ENCODE measurements at regions of chr4 and their contacts with region 1.

Region 1: DNA sequence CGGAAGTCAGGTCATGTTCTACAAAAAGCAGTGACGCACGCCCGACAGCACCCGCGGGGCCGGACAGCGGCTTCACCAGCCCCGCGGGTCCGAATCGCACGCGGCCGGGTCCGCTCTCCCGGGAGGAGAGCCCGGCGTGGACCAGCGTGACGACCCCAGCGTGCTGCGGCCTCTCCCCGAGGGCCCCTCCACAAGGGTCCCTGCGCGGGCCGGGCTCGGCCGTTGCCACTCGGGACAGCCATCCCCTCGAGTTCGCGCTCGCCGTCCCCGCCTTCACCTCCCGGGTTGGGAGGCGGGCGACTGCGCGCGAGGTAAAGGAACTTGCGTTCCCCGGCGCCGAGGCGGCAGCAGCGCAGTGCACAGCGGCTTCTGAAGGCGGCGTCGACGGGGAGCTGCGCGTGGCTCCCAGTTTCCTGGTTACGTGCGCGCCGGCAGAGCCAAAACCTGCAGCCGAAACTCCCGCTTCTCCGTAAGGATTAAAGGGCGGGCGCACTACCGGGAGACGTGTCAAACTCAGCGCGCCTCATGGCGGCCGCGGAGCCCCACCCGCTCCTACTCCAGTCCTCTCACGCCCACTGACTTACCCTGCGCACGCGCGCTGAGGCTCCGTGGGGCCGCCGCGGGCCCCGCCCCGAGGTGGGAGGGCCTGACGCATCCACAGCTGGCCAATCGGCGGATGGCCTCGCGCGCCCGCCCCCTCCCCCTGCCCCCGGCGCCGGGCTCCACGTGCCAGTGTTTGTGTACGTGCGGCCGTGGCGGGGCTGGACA is 416 bp upstream of the LRP2BP start:
- DNase-seq: peak; percentile 96 to 98
- ATAC-seq: peak; percentile 96 to 99 (median 97)
- H3K4me3 ChIP-seq: peak overlapping the region; percentile 58 to 83 (median 73)
- H3K27ac ChIP-seq: peak overlapping the region; percentile 98 to 100 (median 99)
- H3K4me1 ChIP-seq: peaks cover 7 to 47% (median 43%) of the 10 kb centered on the region in 9 donors
- H3K27me3 ChIP-seq: no peaks in the 10 kb centered on the region
- CTCF ChIP-seq: no peak

Region 2: GRCh38 chr4:184544788-184545409 is 851.2 kb before region 1 on chr4:
- intact Hi-C with region 1: no loop called
- DNase-seq: no peak
- ATAC-seq: peak in 4 of 8 donors; percentile 21 to 39 (median 36)
- H3K4me3 ChIP-seq: no peak overlapping the region
- H3K27ac ChIP-seq: no peak overlapping the region
- H3K4me1 ChIP-seq: peaks cover 0 to 5% (median 0%) of the 10 kb centered on the region in 9 donors
- H3K27me3 ChIP-seq: no peaks in the 10 kb centered on the region
- CTCF ChIP-seq: no peak

Region 3: DNA sequence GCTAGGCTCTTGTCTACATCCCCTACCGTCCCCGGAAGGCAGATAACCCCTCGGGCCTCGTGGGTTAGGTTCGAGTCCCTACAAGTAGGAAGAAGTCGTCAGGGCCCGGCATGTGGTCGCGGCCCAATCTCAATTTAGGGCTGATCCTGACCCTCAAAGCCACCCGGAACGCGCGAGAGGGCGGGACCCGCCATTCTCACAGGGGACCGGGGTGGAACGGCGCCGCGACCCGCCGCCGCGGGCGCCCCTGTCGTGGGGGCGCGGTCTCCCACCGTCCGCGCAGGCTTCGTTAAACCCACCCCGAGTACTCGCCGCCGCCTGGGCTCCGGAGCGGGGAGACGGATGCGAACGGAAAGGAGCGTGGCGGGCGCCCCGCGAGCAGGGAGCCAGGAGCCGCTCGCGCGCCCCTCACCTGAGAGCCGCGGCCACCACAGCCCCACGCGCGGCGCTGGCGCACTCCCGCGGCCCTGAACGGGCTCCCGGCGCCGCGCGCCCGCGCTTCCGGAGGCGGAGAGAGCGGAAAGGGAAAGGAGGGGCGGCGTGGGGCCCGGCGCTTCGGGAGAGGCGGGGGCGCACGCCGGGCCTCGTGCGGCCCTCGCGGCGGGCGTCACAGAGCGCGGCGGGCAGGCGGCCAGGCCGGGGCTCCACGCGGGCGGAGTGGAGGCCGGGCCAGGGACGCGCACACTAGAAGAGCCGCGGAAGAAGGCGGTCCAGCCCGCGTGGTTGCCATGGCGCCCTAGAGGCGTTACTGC is 192.5 kb before region 1 on chr4 and contains the start of gene CFAP97:
- intact Hi-C with region 1: loop called in 3 of 10 experiments (anchors 5 to 10 kb)
- DNase-seq: peak; percentile 90 to 92
- ATAC-seq: peak; percentile 92 to 96 (median 94)
- H3K4me3 ChIP-seq: peak within 1 kb of the TSS; percentile 42 to 86 (median 79)
- H3K27ac ChIP-seq: peak within 1 kb of the TSS; percentile 93 to 99 (median 98)
- H3K4me1 ChIP-seq: peaks cover 6 to 39% (median 27%) of the 10 kb centered on the region in 9 donors
- H3K27me3 ChIP-seq: peaks cover 0 to 7% (median 0%) of the 10 kb centered on the region in 7 donors
- CTCF ChIP-seq: peak in 3 of 9 donors; percentile 9 to 24 (median 18)
- total RNA-seq, gene CFAP97: 10.6 to 20.9 (median 13.0) TPM

Region 4: DNA sequence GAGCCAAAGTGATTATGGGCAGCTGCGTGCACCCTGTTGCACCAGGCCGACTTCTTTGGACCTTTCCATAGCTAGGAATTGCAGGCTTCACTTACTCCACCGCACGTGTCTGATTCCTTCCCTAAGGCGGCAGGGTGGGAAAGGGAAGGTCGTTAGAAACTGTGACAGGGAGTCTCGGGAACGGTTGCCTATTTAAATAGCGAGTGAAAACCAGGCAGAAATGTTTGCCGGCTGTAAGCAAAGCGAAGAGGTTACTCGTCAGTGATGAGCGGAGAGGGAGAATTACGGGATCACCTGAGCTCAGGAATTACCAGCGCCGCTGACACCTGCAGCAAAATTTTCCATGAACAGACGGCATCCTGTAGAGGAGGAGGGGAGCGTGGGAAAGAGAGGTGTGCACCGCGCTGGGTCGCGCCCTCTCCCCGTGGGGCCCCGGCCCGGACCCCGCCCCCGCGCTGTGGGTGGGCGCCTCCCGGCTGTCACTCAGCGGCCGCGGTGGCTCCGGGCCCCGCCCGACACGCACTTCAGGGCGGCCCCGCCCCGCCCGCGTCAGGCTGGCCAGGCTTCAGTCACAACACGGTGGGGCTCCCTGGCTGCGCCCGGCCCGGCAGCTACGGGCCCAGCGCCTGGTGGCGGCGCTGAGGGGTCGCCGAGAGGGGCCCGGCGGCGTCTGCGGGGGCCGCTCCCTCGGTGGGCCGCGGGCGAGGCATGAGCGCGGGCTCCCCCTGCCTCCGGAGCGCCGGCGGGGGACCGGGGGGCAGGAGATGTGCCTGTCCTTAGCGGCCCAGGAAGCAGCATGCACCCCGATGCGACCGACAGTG is 186.9 kb before region 1 on chr4 and contains the start of gene SNX25:
- intact Hi-C with region 1: loop called in 7 of 10 experiments (anchors 5 to 10 kb)
- DNase-seq: peak; percentile 85 to 90
- ATAC-seq: peak; percentile 94 to 98 (median 96)
- H3K4me3 ChIP-seq: peak within 1 kb of the TSS; percentile 54 to 94 (median 70)
- H3K27ac ChIP-seq: peak within 1 kb of the TSS; percentile 65 to 91 (median 87)
- H3K4me1 ChIP-seq: peaks cover 6 to 35% (median 27%) of the 10 kb centered on the region in 9 donors
- H3K27me3 ChIP-seq: peaks cover 0 to 43% (median 0%) of the 10 kb centered on the region in 7 donors
- CTCF ChIP-seq: peak in 4 of 9 donors; percentile 32 to 57 (median 41)
- total RNA-seq, gene SNX25: 7.4 to 12.6 (median 9.8) TPM

Region 5: DNA sequence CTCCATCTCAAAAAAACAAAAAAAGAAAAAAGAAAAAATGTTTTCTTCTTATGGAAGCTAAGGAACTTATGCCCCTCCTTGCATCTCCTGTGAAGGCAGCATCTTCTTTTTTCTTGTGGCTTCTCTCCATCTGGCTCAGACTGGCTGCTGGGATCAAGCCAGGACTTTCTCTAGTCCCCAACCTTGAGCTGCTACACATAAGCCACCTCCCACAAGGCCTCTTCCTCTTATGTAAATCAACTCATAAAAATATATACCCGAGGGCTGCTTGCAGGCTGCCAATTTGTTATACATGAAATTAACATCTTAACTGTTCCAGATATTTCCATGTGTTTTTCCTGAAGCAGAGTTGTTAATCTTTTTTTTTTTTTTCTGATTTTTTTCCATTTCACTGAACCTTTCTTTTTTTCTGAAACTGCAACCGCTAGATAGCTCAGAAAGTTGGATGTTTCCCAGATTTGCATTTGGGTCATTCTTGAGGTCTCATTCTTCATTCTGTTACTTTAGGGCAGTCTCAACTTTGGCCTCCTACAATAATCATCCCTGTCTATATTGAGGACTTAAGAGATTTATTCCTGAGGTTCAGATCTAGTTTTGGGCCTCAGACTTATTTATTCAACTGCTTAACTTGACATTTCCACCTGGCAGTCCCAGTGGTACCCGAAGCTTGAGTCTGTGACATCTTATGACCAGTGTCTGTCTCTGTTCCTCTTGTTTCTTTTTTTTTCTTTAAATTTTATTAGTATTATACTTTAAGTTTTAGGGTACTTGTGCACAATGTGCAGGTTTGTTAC is 176.4 kb before region 1 on chr4:
- intact Hi-C with region 1: loop called in 5 of 10 experiments (anchors 5 to 10 kb)
- DNase-seq: peak; percentile 25 to 58
- ATAC-seq: peak in 6 of 8 donors; percentile 47 to 64 (median 54)
- H3K4me3 ChIP-seq: no peak overlapping the region
- H3K27ac ChIP-seq: peak overlapping the region in 2 of 10 donors; percentile 25 to 36
- H3K4me1 ChIP-seq: peaks cover 0 to 41% (median 22%) of the 10 kb centered on the region in 9 donors
- H3K27me3 ChIP-seq: no peaks in the 10 kb centered on the region
- CTCF ChIP-seq: no peak

Region 6: DNA sequence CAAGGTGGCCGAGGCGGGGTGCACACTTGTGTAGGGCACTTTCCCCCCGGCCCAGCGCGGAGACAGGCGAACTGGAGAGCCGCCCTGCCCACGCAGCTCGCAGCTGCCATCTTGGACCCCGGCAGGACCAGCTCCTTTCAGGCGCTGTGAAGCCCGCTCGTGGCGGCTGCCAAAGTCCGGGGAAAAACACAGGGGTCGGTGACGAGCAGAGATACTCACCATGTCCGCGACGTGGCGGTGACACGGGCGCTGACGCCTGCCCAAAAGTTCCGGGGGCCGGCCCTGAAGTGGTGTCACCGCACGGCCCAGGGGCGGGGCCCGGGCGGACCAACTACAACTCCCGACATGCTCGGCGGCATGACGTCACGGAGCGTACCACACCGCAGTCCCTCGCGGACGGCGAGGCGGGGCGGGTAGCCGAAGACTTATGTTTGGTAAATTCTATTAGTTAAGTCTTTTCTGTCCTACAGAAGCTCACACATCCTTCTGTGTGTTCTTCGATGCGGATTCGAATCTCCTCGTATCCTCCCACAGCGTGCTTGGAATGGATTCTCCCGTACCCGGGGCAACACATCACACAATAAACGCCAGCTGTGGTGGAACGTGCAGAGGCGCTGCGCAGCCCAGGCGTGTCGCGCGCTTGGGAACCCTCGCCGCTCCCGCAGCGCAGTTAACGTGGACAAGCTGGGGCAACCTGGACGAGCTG is 29.7 kb after region 1 on chr4 and contains the start of gene UFSP2:
- intact Hi-C with region 1: loop called in 2 of 10 experiments (anchors 2 kb)
- DNase-seq: peak; percentile 89 to 90
- ATAC-seq: peak; percentile 97 to 99 (median 98)
- H3K4me3 ChIP-seq: peak within 1 kb of the TSS; percentile 50 to 89 (median 75)
- H3K27ac ChIP-seq: peak within 1 kb of the TSS; percentile 89 to 97 (median 95)
- H3K4me1 ChIP-seq: peaks cover 0 to 48% (median 32%) of the 10 kb centered on the region in 9 donors
- H3K27me3 ChIP-seq: no peaks in the 10 kb centered on the region
- CTCF ChIP-seq: no peak
- total RNA-seq, gene UFSP2: 29.4 to 52.4 (median 43.7) TPM

Region 7: DNA sequence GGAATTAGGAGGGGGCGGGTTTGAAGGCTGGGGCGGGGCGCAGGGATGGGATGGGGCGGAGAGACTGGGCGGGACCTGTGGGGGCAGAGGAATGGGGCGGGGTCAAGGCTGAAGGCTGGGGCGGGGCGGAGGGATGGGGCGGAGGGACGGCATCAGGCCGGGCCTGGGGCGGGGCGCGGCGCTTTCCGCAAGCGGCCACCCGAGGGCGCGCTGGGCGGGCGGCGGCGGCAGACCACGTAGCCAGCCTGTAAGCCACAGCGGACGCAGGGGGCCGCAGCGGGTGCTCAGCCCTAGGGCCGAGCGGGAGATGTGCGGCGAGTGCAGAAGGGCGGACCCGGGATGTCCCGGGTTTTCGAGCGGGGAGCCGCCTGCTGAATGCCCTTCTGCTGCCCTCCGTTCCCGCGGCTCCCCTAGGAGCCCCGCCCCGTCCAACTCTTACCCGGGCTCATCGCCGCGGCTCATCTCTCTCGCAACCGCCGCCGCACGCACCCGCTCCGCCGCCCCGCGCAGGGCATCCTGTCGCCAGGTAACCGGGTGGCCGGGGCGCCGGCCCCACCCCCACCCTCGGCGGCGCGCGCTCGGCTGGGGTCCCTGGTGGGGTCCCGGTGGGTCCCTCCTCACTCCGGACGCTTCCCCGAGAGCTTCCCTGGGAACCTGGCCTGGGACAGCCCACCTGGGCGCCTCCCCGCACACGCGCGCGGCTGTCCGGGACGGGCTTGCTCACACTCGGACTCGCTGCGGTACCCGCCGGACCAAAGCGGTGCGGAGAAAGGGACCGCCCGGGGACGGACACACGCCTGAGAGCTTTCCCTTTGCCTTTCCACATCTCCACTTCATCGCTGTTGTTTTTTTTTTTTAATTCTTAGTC is 75.3 kb after region 1 on chr4 and contains the start of gene CCDC110:
- intact Hi-C with region 1: loop called in 1 of 10 experiments (anchors 5 kb)
- DNase-seq: peak; percentile 96 to 97
- ATAC-seq: peak; percentile 96 to 98 (median 98)
- H3K4me3 ChIP-seq: peak within 1 kb of the TSS; percentile 68 to 98 (median 86)
- H3K27ac ChIP-seq: peak within 1 kb of the TSS in 9 of 10 donors; percentile 40 to 81 (median 77)
- H3K4me1 ChIP-seq: peaks cover 0 to 22% (median 12%) of the 10 kb centered on the region in 9 donors
- H3K27me3 ChIP-seq: peaks cover 0 to 37% (median 0%) of the 10 kb centered on the region in 7 donors
- CTCF ChIP-seq: peak; percentile 61 to 91 (median 75)
- total RNA-seq, gene CCDC110: 0.54 to 2.5 (median 1.9) TPM

Region 8: GRCh38 chr4:185524888-185525863 is 129.0 kb after region 1 on chr4:
- intact Hi-C with region 1: no loop called
- DNase-seq: no peak
- ATAC-seq: peak in 4 of 8 donors; percentile 36 to 70 (median 54)
- H3K4me3 ChIP-seq: no peak overlapping the region
- H3K27ac ChIP-seq: peak overlapping the region in 4 of 10 donors; percentile 5 to 57 (median 28)
- H3K4me1 ChIP-seq: peaks cover 6 to 52% (median 18%) of the 10 kb centered on the region in 9 donors
- H3K27me3 ChIP-seq: peaks cover 0 to 28% (median 0%) of the 10 kb centered on the region in 7 donors
- CTCF ChIP-seq: no peak

Region 9: DNA sequence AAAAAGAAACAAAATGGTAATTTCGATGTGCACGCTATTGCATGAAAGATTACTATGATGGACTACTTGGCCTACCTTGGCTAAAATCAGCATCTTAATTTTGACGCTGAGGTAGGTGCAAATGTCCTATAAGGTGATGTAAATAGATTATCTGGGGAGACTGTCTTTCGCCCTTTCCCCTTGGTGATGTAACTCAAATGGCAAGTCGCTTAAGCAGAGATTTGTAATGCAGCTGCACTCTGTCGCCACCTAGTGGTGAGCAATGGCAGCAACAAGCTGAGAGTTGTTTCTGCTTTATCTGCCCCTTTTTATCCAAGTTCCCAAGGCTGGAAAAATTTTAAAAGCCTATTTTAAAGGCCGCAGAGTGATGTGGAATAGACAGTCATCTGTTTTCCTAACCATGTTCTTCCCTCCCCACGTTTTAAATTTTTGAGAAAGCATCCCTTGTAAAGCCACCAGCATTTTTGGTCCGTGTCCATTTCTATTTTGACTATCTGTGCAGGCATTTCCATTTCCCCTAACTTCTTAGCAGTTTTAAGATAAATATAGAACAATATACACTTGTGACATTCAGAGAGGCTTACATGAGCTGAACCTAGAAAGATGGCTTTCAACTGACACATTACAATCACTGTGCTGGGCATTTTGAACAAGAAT is 201.5 kb after region 1 on chr4:
- intact Hi-C with region 1: loop called in 1 of 10 experiments (anchors 10 kb)
- DNase-seq: peak; percentile 72 to 82
- ATAC-seq: peak; percentile 2 to 78 (median 50)
- H3K4me3 ChIP-seq: no peak overlapping the region
- H3K27ac ChIP-seq: peak overlapping the region in 9 of 10 donors; percentile 9 to 67 (median 46)
- H3K4me1 ChIP-seq: peaks cover 3 to 61% (median 38%) of the 10 kb centered on the region in 9 donors
- H3K27me3 ChIP-seq: peaks cover 0 to 3% (median 0%) of the 10 kb centered on the region in 7 donors
- CTCF ChIP-seq: peak; percentile 98 to 100 (median 98)

Measured in heart right ventricle (tissue), 16 donors.